ENCODE measurements at regions of chr7 and their contacts with region 1.

Region 1: GRCh38 chr7:129864042-129864441 is 88.7 kb downstream of the UBE2H start:
- DNase-seq: peak in 1 of 2 donors; percentile 58
- ATAC-seq: peak; percentile 84
- H3K4me3 ChIP-seq: no peak overlapping the region
- H3K27ac ChIP-seq: peak overlapping the region in 1 of 2 donors; percentile 89
- H3K4me1 ChIP-seq: peaks cover 13 to 15% of the 10 kb centered on the region in 2 donors
- H3K27me3 ChIP-seq: no peaks in the 10 kb centered on the region

Region 2: DNA sequence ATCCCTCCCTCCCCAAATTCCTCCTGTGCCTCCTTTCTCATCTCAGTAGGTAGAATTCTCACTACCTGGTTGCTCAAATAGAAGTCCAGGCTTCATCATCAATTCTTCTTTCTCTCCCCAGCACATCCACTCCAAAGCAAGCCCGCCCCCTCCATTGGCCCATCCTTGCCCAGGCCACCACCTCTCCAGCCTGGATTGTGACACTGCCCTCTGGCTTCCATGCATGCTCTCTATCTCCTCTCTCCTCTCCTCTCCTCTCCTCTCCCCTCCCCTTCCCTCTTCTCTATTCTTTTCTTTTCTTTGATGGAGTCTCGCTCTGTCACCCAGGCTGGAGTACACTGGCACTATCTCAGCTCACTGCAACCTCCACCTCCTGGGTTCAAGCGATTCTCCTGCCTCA is 56.2 kb before region 1 on chr7:
- intact Hi-C with region 1: no loop called
- DNase-seq: peak in 1 of 2 donors; percentile 50
- ATAC-seq: no peak
- H3K4me3 ChIP-seq: no peak overlapping the region
- H3K27ac ChIP-seq: no peak overlapping the region
- H3K4me1 ChIP-seq: no peaks in the 10 kb centered on the region
- H3K27me3 ChIP-seq: no peaks in the 10 kb centered on the region

Region 3: GRCh38 chr7:129903935-129904334 is 39.9 kb after region 1 on chr7:
- intact Hi-C with region 1: no loop called
- DNase-seq: no peak
- ATAC-seq: no peak
- H3K4me3 ChIP-seq: no peak overlapping the region
- H3K27ac ChIP-seq: no peak overlapping the region
- H3K4me1 ChIP-seq: peaks cover 2 to 6% of the 10 kb centered on the region in 2 donors
- H3K27me3 ChIP-seq: no peaks in the 10 kb centered on the region

Region 4: DNA sequence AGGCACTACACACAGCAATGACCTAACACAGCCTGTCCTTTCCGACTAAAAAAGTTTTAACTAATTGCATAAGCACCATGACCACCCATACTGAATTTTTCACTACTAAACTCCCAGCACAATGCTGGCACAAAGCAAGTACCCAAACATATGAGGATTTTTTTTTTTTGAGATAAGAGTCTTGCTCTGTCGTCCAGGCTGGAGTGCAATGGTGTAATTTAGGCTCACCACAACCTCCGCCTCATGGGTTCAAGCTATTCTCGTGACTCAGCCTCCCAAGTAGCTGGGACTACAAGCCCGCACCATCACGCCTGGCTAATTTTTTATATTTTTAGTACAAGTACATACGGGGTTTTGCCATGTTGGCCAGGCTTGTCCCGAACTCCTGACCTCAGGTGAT is 83.7 kb after region 1 on chr7:
- intact Hi-C with region 1: loop called (anchors 1 to 5 kb)
- DNase-seq: no peak
- ATAC-seq: no peak
- H3K4me3 ChIP-seq: no peak overlapping the region
- H3K27ac ChIP-seq: no peak overlapping the region
- H3K4me1 ChIP-seq: peaks cover 0 to 4% of the 10 kb centered on the region in 2 donors
- H3K27me3 ChIP-seq: no peaks in the 10 kb centered on the region

Region 5: GRCh38 chr7:130996841-130997231 is 1132.8 kb after region 1 on chr7:
- intact Hi-C with region 1: no loop called
- DNase-seq: no peak
- ATAC-seq: no peak
- H3K4me3 ChIP-seq: no peak overlapping the region
- H3K27ac ChIP-seq: peak overlapping the region in 1 of 2 donors; percentile 32
- H3K4me1 ChIP-seq: peaks cover 0 to 15% of the 10 kb centered on the region in 2 donors
- H3K27me3 ChIP-seq: no peaks in the 10 kb centered on the region